CD4-positive, alpha-beta memory T cell (primary cell): ENCODE measurements at regions of chr2 and their contacts with region 1.

Region 1: DNA sequence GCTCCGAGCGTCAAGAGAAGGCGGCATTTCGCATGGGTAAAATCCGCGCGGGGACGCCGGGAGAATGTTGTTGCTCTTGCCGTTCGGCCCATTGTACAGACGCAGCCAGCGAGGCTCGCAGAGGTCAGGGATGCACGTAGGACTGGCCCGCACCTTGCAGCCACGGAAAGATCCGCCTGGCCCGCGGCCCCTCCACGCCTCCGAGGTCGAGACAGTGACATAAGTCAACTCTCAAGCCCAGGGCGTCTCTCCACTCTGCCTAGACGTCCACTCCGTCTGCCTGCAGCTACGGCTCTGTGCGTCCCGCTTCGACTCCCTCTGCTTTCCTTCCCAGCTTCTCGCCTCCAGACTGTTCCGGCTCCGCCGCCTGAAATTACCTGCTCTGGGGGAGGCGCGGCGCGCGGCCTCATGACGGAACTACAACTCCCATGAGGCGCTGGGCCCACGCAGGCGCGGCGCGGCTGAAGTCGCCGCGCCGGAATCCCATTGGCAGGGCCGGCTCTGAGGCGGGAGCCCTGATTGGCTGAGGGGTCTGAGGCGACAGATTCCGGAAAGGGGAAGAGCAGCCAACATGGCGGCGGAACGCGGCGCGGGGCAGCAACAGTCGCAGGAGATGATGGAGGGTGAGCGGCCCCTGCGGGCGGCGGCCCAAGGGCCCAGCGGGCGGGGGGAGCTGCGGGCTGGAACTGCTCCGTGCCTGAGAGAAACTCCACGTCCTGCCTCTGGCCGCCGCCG is at the start of gene PPP1R7:
- DNase-seq: peak; percentile 94 to 97 (median 95)
- H3K4me3 ChIP-seq: peak within 1 kb of the TSS; percentile 70 to 93
- H3K4me3 Mint-ChIP-seq: peak within 1 kb of the TSS; percentile 93 to 100 (median 100)
- H3K27ac ChIP-seq: peak within 1 kb of the TSS; percentile 75
- H3K27ac Mint-ChIP-seq: peak within 1 kb of the TSS; percentile 94 to 99 (median 97)
- H3K4me1 ChIP-seq: peaks cover 26% of the 10 kb centered on the region
- H3K4me1 Mint-ChIP-seq: peaks cover 29 to 51% (median 44%) of the 10 kb centered on the region in 4 donors
- H3K27me3 ChIP-seq: no peaks in the 10 kb centered on the region
- H3K27me3 Mint-ChIP-seq: no peaks in the 10 kb centered on the region
- total RNA-seq, gene PPP1R7: 61.3 to 68.9 TPM

Region 2: GRCh38 chr2:240983361-240983995 is 166.6 kb before region 1 on chr2:
- CTCF ChIA-PET with region 1: interaction called, 4 read pairs
- POLR2A ChIA-PET with region 1: interaction called, 5 read pairs
- intact Hi-C with region 1: loop called (anchors 5 kb)
- DNase-seq: peak in 4 of 5 donors; percentile 14 to 30 (median 24)
- H3K4me3 ChIP-seq: no peak overlapping the region
- H3K4me3 Mint-ChIP-seq: no peak overlapping the region
- H3K27ac ChIP-seq: no peak overlapping the region
- H3K27ac Mint-ChIP-seq: no peak overlapping the region
- H3K4me1 ChIP-seq: no peaks in the 10 kb centered on the region
- H3K4me1 Mint-ChIP-seq: peaks cover 0 to 5% (median 5%) of the 10 kb centered on the region in 4 donors
- H3K27me3 ChIP-seq: no peaks in the 10 kb centered on the region
- H3K27me3 Mint-ChIP-seq: peaks cover 0 to 4% of the 10 kb centered on the region in 2 donors

Region 3: DNA sequence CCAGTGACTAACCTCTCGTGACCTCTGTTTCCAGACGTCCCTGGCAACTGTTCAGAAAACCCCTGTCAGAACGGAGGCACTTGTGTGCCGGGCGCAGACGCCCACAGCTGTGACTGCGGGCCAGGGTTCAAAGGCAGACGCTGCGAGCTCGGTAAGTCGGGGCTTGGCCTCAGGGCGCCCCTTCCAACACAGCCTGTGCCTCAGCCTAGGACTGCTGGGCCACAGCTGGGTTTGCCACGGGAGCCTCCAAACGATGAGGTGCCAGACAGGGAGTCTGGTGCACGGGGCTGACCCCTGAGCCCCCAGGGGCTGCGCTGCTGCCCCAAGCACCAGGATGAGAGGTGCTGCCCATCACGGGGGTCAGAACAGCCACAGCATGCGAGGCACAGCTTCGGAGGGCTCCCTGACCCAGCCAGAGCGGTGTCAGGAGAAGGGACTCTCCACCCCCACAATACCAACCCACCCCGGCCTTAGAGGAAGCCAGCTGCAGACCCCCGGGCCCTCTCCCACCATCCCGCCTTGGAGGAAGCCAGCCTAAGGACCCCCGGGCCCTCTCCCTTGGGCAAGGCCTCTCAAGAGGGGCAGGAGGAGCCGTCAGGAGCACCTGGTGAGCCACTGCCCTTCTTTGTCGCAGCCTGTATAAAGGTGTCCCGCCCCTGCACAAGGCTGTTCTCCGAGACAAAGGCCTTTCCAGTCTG is 68.3 kb before region 1 on chr2:
- CTCF ChIA-PET with region 1: interaction called, 76 read pairs
- POLR2A ChIA-PET with region 1: interaction called, 37 read pairs
- intact Hi-C with region 1: loop called (anchors 1 kb)
- DNase-seq: no peak
- H3K4me3 ChIP-seq: no peak overlapping the region
- H3K4me3 Mint-ChIP-seq: peak overlapping the region in 1 of 8 donors; percentile 6
- H3K27ac ChIP-seq: no peak overlapping the region
- H3K27ac Mint-ChIP-seq: peak overlapping the region in 5 of 7 donors; percentile 19 to 89 (median 68)
- H3K4me1 ChIP-seq: no peaks in the 10 kb centered on the region
- H3K4me1 Mint-ChIP-seq: peaks cover 21 to 33% (median 23%) of the 10 kb centered on the region in 4 donors
- H3K27me3 ChIP-seq: no peaks in the 10 kb centered on the region
- H3K27me3 Mint-ChIP-seq: no peaks in the 10 kb centered on the region

Region 4: DNA sequence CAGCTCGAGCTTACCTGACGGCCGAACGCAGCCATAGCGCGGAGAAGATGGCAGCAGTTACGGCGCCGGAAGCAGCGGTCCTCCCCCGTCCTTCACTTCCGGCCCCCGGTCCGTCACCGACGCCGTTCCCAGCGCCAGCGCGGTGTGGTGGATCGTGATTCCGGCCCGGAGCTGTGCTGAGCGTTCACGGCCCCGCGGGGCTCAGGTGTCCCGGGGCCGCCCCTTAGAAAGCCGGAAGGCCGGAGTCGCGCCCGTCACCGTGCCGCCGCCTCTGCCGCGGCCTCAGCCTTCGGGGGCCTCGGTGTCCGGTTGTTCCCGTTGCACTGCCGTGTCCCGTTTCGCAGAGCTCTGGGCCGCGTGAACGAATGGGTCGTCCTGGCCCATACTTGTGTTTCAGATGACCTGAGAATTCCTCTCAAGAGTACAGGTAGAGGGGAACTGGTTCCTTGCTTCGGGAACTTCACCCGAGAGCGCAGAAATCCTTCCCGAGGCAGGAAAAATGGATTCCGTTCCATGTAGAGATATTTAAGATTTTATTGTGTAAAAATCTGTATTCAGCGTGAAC is 47.8 kb before region 1 on chr2 and contains the start of gene MTERF4:
- CTCF ChIA-PET with region 1: interaction called, 16 read pairs
- POLR2A ChIA-PET with region 1: interaction called, 299 read pairs
- intact Hi-C with region 1: loop called (anchors 1 kb)
- DNase-seq: peak; percentile 85 to 88 (median 86)
- H3K4me3 ChIP-seq: peak within 1 kb of the TSS; percentile 92 to 94
- H3K4me3 Mint-ChIP-seq: peak within 1 kb of the TSS; percentile 94 to 98 (median 96)
- H3K27ac ChIP-seq: peak within 1 kb of the TSS; percentile 92
- H3K27ac Mint-ChIP-seq: peak within 1 kb of the TSS; percentile 97 to 99 (median 98)
- H3K4me1 ChIP-seq: peaks cover 88% of the 10 kb centered on the region
- H3K4me1 Mint-ChIP-seq: peaks cover 32 to 88% (median 62%) of the 10 kb centered on the region in 4 donors
- H3K27me3 ChIP-seq: no peaks in the 10 kb centered on the region
- H3K27me3 Mint-ChIP-seq: no peaks in the 10 kb centered on the region
- total RNA-seq, gene MTERF4: 204 to 227 TPM

Region 5: DNA sequence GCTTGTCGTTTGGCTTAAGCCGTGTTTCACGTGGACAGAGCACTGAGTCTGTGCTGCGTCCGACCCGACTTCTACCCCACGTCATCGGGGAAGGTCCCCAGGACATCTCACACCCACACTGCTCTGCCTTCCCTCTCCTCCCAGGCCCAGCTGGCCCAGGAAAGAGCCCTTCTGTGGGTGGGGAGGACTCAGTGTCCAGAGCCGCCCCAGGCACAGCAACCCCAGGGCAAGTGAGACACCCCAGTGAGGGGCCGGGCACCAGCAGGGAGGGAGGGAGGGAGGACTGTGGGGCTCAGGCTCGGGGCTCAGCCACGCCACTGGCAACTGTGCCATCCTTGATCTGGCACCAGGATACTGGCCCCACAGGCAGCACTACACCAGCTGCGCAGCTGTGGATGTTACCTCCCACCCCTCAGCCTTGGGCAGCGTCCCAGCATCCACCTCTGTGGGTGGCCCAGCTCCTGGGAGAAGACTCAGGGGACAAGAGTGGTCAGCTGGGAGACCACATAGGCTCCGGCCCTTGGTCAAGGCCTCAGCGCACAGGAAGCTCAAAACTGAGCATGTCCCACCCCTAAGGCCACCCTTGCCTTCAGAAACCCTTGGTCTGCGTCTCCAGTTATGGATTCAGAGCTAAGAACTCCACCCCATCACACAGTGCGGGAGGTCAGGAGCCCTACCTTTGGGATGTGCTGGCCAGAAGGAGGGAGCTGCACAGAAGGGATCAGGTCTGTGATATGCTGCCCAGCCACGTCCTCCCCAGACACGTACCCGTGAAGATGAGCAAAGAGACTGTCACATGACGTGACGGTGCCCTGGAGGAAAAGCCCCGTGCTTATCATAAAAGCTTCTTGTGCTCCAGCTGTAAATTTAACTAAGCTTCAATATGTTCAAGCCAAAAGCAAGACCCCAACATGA is 12.6 kb before region 1 on chr2:
- CTCF ChIA-PET with region 1: no interaction called
- POLR2A ChIA-PET with region 1: interaction called, 11 read pairs
- intact Hi-C with region 1: no loop called
- DNase-seq: no peak
- H3K4me3 ChIP-seq: no peak overlapping the region
- H3K4me3 Mint-ChIP-seq: no peak overlapping the region
- H3K27ac ChIP-seq: no peak overlapping the region
- H3K27ac Mint-ChIP-seq: peak overlapping the region in 2 of 7 donors; percentile 9 to 67
- H3K4me1 ChIP-seq: no peaks in the 10 kb centered on the region
- H3K4me1 Mint-ChIP-seq: peaks cover 0 to 8% (median 5%) of the 10 kb centered on the region in 4 donors
- H3K27me3 ChIP-seq: no peaks in the 10 kb centered on the region
- H3K27me3 Mint-ChIP-seq: no peaks in the 10 kb centered on the region